ENCODE measurements at regions of chr2 and their contacts with region 1.

Region 1: DNA sequence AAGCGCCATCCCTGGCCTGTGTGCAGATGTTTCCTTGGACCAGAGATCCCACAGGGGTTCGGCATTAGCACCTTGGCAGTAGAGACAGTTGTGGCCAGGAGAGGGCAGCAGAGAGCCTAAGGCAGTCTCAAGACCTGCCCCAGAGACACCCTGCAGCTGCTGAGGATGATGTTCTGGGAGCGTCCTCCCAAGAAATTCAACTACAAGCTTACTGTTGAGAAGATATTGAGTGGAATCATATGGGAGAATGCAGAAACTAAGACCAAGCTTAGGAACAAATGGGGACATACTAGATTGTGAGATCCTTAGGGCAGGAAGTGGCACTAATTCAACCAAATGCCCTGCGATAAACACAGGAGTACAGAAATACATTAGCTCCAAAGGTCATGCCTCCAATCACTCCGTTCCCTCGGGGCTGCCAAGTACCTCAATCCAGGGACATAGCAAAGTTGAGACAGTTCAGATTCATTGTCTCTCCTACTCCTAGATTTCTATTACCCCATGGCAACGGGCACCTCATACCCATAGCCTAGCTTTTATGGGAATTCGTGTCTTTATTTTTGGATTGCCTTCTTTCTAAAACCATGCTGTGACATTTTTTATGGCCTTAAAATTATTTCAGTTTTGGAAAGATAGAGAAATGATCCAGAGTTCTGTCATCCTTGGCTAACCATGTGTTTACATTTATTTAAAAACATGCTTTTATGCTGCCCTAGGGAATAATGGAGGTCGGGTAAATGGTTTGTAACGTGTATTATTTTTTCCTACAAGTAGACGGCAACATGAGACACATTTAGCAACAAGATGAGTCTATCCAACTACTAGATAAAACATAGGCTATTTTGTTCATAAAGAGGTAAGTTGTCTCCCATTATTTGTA is 2.2 kb upstream of the ERMN start:
- DNase-seq: peak; percentile 73
- CTCF ChIP-seq: peak; percentile 93

Region 2: DNA sequence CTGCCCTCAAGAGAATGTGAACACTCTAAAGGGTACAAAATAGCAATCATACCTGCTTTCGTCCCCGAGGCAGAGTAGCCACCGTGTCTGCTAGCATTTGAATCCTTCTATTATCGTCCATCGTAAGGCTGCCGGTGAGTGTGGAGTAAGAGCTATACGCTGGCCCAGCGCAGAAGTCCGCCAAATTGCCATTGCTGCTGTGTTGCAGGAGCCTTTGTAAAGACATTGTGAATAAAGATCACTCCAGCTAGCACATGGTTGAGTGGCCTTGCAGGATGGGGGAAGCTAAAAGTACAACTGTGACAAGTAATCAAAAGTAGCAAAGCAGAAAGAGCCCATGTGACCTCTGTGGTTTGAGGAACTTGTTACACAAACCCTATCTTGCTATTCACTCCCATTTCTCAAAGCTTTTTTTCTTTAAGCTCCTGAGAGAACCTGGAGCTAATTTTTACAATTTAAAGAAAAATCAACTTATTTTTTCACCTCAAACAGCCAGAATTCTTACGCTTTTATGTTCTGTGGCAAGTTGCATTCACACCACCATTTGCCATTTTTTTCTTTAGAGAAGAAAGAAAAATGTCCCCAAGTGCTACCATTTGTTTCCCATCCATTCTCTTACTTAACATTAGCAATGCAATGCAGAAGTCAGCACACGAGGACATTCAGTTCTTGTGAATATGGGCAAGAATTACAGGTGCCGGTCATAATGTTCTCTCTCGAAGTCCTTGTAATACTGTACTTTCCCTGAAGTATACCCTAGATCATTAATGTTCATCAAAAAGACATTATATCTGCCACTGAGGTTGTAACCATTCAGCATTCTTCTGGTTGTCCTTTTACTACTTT is 116.2 kb after region 1 on chr2 and contains the start of gene CYTIP:
- in situ Hi-C with region 1: loop called (anchors 25 kb)
- DNase-seq: peak; percentile 12
- CTCF ChIP-seq: no peak